ENCODE measurements at regions of chr2 and their contacts with region 1.

Region 1: GRCh38 chr2:7044261-7045250 is 127.3 kb downstream of the RNF144A start:
- DNase-seq: peak; percentile 55 to 63 (median 58)
- H3K4me3 ChIP-seq: no peak overlapping the region
- H3K4me3 Mint-ChIP-seq: no peak overlapping the region
- H3K27ac ChIP-seq: no peak overlapping the region
- H3K27ac Mint-ChIP-seq: peak overlapping the region in 2 of 7 donors; percentile 38 to 90
- H3K4me1 ChIP-seq: no peaks in the 10 kb centered on the region
- H3K4me1 Mint-ChIP-seq: peaks cover 6 to 14% (median 11%) of the 10 kb centered on the region in 4 donors
- H3K27me3 ChIP-seq: no peaks in the 10 kb centered on the region
- H3K27me3 Mint-ChIP-seq: no peaks in the 10 kb centered on the region

Region 2: GRCh38 chr2:6887751-6888192 is 156.8 kb before region 1 on chr2:
- CTCF ChIA-PET with region 1: interaction called, 188 read pairs
- POLR2A ChIA-PET with region 1: no interaction called
- intact Hi-C with region 1: no loop called
- DNase-seq: no peak
- H3K4me3 ChIP-seq: no peak overlapping the region
- H3K4me3 Mint-ChIP-seq: no peak overlapping the region
- H3K27ac ChIP-seq: no peak overlapping the region
- H3K27ac Mint-ChIP-seq: no peak overlapping the region
- H3K4me1 ChIP-seq: no peaks in the 10 kb centered on the region
- H3K4me1 Mint-ChIP-seq: peaks cover 0 to 4% (median 2%) of the 10 kb centered on the region in 4 donors
- H3K27me3 ChIP-seq: no peaks in the 10 kb centered on the region
- H3K27me3 Mint-ChIP-seq: no peaks in the 10 kb centered on the region

Region 3: DNA sequence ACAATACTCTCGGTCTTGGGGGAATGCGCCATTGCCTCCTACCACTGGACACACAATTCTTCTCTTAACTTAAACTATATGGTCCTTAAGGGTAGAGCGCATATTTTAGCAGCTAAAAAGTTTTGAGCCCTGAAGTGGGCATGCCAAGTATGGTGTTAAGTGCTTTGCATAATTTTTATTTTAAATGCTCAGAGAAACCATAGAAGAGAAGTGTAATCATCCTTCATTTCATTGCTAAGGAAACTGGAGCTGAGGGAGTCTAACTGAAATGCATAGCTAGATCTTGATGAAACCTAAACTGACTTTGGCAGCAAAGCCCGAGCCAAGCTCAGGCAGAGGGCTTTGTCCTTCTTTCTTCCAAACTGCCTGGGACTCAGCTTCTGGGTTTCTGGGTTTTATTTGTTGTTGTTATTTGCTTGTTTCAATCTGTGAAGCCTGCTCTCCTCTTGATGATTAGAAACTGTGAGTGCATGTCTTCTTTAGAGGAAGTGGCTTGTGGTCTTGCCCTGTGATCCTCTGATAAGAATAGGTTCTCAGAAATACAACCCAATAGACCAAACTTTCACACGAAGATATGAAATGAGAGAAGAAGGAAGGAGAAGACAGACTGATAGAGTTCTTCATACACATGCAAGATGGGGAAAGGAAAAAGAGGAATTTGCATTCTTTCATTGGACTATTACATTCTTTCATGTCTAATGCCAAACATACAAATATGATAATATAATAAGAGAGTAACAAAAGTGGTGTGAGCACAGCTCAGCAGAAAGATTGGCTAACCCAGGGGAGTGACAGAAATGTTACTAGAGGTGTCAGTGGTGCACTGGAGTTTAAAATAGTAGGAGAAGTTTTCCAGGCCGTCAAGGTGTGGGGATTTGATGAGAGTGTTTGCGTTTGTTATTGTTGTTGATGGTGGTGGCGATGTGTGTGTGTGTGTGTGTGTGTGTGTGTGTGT is 134.8 kb before region 1 on chr2:
- CTCF ChIA-PET with region 1: interaction called, 22 read pairs
- POLR2A ChIA-PET with region 1: no interaction called
- intact Hi-C with region 1: no loop called
- DNase-seq: peak; percentile 73 to 81 (median 75)
- H3K4me3 ChIP-seq: peak overlapping the region in 1 of 2 donors; percentile 40
- H3K4me3 Mint-ChIP-seq: peak overlapping the region; percentile 63 to 88 (median 78)
- H3K27ac ChIP-seq: peak overlapping the region; percentile 4
- H3K27ac Mint-ChIP-seq: peak overlapping the region; percentile 76 to 98 (median 93)
- H3K4me1 ChIP-seq: peaks cover 86% of the 10 kb centered on the region
- H3K4me1 Mint-ChIP-seq: peaks cover 72 to 91% (median 78%) of the 10 kb centered on the region in 4 donors
- H3K27me3 ChIP-seq: no peaks in the 10 kb centered on the region
- H3K27me3 Mint-ChIP-seq: no peaks in the 10 kb centered on the region

Region 4: DNA sequence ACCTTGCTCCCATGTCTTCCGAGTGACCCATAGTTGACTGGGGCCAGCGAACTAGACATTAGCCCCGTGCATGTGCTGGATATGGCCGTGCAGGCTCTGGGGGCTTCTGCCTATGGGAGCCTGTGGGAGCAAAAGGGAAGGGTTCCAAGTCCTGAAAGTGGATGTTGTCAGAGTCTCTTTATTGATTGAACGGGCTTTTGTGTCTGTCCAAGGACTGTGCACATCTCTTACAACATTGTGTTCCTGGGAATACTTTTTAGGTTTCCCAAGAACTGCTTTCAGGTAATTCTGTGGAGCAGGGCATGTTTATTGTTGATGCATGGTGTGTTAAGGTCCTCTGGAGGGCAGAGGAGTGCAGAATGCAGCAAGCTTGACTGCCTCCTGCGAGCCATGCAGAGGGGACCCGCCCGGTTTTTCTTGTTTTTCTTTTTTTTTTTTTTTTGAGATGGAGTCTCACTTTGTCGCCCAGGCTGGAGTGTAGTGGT is 122.3 kb before region 1 on chr2:
- CTCF ChIA-PET with region 1: interaction called, 21 read pairs
- POLR2A ChIA-PET with region 1: no interaction called
- intact Hi-C with region 1: no loop called
- DNase-seq: no peak
- H3K4me3 ChIP-seq: no peak overlapping the region
- H3K4me3 Mint-ChIP-seq: no peak overlapping the region
- H3K27ac ChIP-seq: no peak overlapping the region
- H3K27ac Mint-ChIP-seq: peak overlapping the region in 1 of 7 donors; percentile 25
- H3K4me1 ChIP-seq: peaks cover 59% of the 10 kb centered on the region
- H3K4me1 Mint-ChIP-seq: peaks cover 45 to 87% (median 66%) of the 10 kb centered on the region in 4 donors
- H3K27me3 ChIP-seq: no peaks in the 10 kb centered on the region
- H3K27me3 Mint-ChIP-seq: no peaks in the 10 kb centered on the region

Region 5: DNA sequence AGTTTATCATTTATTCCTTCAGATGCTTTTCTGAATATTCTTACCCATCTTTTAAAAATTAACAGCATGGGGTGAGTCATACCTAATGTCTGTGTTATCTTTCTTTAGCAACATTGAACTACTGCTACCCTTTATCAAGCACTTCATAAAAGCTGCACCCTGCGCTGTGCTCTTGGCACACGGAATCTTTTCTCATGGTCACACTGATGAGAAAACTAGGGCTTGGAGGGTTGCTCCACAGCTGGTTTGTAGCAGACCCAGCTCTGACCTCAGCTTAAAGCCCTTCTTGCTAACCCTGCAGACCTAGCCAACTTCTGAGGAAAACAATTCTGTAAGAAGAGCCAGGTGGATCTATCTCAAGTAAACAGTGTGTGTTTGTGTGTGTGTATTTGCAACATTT is 21.0 kb before region 1 on chr2:
- CTCF ChIA-PET with region 1: interaction called, 46 read pairs
- POLR2A ChIA-PET with region 1: no interaction called
- intact Hi-C with region 1: no loop called
- DNase-seq: no peak
- H3K4me3 ChIP-seq: no peak overlapping the region
- H3K4me3 Mint-ChIP-seq: no peak overlapping the region
- H3K27ac ChIP-seq: no peak overlapping the region
- H3K27ac Mint-ChIP-seq: peak overlapping the region in 2 of 7 donors; percentile 24 to 58
- H3K4me1 ChIP-seq: no peaks in the 10 kb centered on the region
- H3K4me1 Mint-ChIP-seq: peaks cover 1 to 4% (median 3%) of the 10 kb centered on the region in 4 donors
- H3K27me3 ChIP-seq: no peaks in the 10 kb centered on the region
- H3K27me3 Mint-ChIP-seq: no peaks in the 10 kb centered on the region

Region 6: DNA sequence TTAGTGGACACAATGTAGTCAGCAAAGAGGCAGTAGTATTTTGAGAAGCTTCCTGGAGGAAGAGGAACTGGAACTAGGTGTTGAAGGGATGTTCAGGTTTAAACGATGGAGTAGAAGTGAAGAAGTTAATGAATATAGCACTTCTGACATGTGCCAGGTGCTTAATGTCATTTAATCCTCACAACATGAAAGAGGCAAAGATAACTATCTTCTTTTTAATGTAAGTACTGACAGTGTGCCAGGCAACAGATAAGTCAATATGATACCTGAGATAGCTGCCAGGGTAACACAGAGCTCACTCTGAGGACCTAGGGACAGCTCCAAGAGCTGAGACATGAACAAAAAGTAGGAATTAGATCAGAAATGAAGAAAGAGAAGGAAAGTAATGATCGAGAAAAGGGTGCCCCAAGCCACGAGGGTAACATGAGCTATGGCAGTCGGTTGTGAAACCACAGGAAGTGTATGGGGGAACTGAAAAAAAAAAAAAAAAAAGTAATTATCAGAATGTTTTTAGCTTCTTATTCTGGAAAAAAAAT is 13.4 kb after region 1 on chr2:
- CTCF ChIA-PET with region 1: interaction called, 74 read pairs
- POLR2A ChIA-PET with region 1: interaction called, 4 read pairs
- intact Hi-C with region 1: no loop called
- DNase-seq: peak in 4 of 5 donors; percentile 38 to 54 (median 40)
- H3K4me3 ChIP-seq: peak overlapping the region in 1 of 2 donors; percentile 39
- H3K4me3 Mint-ChIP-seq: peak overlapping the region; percentile 63 to 88 (median 82)
- H3K27ac ChIP-seq: peak overlapping the region; percentile 24
- H3K27ac Mint-ChIP-seq: peak overlapping the region in 6 of 7 donors; percentile 86 to 95 (median 92)
- H3K4me1 ChIP-seq: peaks cover 46% of the 10 kb centered on the region
- H3K4me1 Mint-ChIP-seq: peaks cover 0 to 31% (median 26%) of the 10 kb centered on the region in 4 donors
- H3K27me3 ChIP-seq: no peaks in the 10 kb centered on the region
- H3K27me3 Mint-ChIP-seq: no peaks in the 10 kb centered on the region

Region 7: DNA sequence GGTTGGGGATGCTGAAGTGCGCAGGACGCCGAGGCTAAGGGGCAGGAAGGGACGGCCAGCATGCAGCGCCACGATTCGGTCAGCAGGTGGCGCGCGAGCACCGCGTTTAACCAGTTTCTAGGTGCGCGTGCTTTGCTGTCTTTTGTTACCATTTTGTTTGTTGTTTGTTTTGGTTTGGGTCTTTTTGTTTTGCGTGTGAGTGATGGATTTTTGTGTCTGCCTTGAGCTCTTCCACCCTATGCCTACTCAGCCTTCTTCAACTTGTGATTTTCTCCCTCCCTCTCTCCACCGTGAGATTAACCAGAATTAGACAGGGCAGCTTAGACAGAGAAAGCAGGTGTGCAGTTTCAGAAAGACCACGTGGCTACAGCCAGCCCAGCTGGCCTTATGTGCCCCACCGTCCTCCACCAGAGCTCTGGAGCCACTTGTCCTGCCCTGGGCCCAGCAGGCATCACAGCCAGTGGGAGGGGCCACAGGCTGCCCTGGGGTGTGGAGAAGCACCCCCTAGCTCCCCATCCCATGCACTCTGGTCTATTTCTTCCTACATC is 52.9 kb after region 1 on chr2:
- CTCF ChIA-PET with region 1: interaction called, 10 read pairs
- POLR2A ChIA-PET with region 1: no interaction called
- intact Hi-C with region 1: no loop called
- DNase-seq: peak; percentile 65 to 72 (median 66)
- H3K4me3 ChIP-seq: peak overlapping the region in 1 of 2 donors; percentile 24
- H3K4me3 Mint-ChIP-seq: peak overlapping the region; percentile 69 to 87 (median 77)
- H3K27ac ChIP-seq: no peak overlapping the region
- H3K27ac Mint-ChIP-seq: peak overlapping the region in 5 of 7 donors; percentile 9 to 64 (median 26)
- H3K4me1 ChIP-seq: peaks cover 9% of the 10 kb centered on the region
- H3K4me1 Mint-ChIP-seq: peaks cover 3 to 9% (median 5%) of the 10 kb centered on the region in 4 donors
- H3K27me3 ChIP-seq: no peaks in the 10 kb centered on the region
- H3K27me3 Mint-ChIP-seq: peaks cover 0 to 1% of the 10 kb centered on the region in 2 donors

Region 8: GRCh38 chr2:8268172-8268783 is 1223.7 kb after region 1 on chr2:
- CTCF ChIA-PET with region 1: no interaction called
- POLR2A ChIA-PET with region 1: no interaction called
- intact Hi-C with region 1: no loop called
- DNase-seq: no peak
- H3K4me3 ChIP-seq: no peak overlapping the region
- H3K4me3 Mint-ChIP-seq: no peak overlapping the region
- H3K27ac ChIP-seq: no peak overlapping the region
- H3K27ac Mint-ChIP-seq: no peak overlapping the region
- H3K4me1 ChIP-seq: no peaks in the 10 kb centered on the region
- H3K4me1 Mint-ChIP-seq: peaks cover under 1 to 2% (median 1%) of the 10 kb centered on the region in 4 donors
- H3K27me3 ChIP-seq: no peaks in the 10 kb centered on the region
- H3K27me3 Mint-ChIP-seq: no peaks in the 10 kb centered on the region